ENCODE measurements at regions of chr11 and their contacts with region 1.

Region 1: DNA sequence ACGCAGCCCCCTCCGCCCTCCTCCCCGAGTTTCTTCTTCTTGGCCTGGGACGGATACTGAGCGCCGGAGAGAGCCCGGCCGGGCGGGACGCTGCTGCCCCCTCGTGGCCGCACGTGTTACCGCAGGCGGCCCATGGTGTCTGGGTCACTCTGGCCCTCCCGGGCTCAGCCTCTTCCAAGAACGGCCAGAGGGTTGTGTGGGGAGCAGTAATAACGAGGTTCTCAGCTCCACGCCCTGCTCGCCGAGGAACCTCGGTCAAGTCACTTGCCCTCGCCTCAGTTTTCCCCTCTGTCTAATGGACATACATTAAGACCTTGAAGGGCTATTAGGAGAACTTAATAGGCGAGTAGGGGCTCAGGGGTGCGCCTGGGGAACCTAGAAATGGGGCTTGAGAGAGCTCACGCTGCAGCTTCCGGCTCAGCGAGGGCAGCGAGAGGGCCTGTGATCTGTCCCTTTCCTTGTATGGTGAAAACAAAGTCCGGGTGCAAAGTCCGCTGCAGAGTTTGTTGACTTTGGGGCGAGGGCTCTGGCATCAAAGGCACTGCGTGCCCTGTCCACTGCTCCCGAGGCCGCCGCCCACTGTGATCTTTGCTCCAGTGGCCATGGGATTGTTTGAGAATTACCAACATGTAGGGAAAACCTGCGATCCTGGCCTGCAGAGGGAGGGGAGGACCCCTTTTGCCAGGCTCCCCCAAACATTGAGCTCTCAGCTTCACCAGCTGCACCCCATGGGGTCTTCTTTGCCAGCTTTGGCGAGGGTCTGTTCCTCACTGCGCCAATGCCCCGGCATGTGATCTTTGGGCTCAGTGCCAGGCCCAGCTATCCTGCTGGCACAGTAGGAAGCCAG is 14.4 kb upstream of the LRP5 start:
- DNase-seq: peak; percentile 89 to 96 (median 94)
- ATAC-seq: peak; percentile 84 to 92 (median 88)
- H3K4me3 ChIP-seq: peak overlapping the region; percentile 16 to 45 (median 38)
- H3K27ac ChIP-seq: peak overlapping the region; percentile 87 to 98 (median 97)
- H3K4me1 ChIP-seq: peaks cover 3 to 34% (median 10%) of the 10 kb centered on the region in 4 donors
- H3K27me3 ChIP-seq: no peaks in the 10 kb centered on the region
- CTCF ChIP-seq: peak; percentile 96 to 99 (median 98)
- POLR2A ChIP-seq: peak; percentile 64

Region 2: GRCh38 chr11:68213555-68214174 is 84.4 kb before region 1 on chr11:
- intact Hi-C with region 1: loop called in 1 of 2 experiments (anchors 10 kb)
- DNase-seq: peak; percentile 90 to 91 (median 91)
- ATAC-seq: peak; percentile 54 to 78 (median 77)
- H3K4me3 ChIP-seq: peak overlapping the region; percentile 72 to 85 (median 81)
- H3K27ac ChIP-seq: peak overlapping the region; percentile 93 to 99 (median 98)
- H3K4me1 ChIP-seq: peaks cover 0 to 47% (median 13%) of the 10 kb centered on the region in 4 donors
- H3K27me3 ChIP-seq: no peaks in the 10 kb centered on the region
- CTCF ChIP-seq: peak in 1 of 4 donors; percentile 19
- POLR2A ChIP-seq: peak; percentile 96

Region 3: DNA sequence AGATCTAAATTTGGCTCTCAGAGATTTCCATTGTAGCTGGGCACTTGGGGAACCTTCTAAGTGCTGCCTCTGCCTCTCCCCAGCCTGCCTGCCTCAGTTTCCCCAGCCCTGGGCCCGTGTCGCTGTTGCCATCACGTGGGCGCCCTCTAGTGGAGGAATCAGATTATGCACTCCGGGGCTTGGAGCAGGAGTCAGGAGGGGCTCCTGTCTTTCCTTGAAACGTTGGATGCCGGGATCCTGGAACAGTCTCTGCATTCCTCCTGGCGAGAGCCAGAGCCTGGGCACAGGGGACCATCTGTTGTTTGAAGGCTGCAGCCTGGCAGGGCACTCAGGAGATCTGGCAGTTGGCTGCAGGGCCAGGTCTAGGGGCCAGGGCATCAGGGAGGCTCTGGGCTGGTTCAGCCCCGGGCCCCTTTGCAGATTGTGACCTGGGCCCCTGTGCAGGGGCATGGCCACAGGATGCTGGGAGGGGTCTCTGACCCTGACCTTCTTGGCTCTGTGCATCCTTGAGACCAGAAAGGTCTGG is 86.0 kb after region 1 on chr11:
- intact Hi-C with region 1: loop called in 1 of 2 experiments (anchors 10 kb)
- DNase-seq: peak in 2 of 3 donors; percentile 68 to 70
- ATAC-seq: no peak
- H3K4me3 ChIP-seq: no peak overlapping the region
- H3K27ac ChIP-seq: no peak overlapping the region
- H3K4me1 ChIP-seq: peaks cover 2 to 74% (median 34%) of the 10 kb centered on the region in 4 donors
- H3K27me3 ChIP-seq: no peaks in the 10 kb centered on the region
- CTCF ChIP-seq: peak; percentile 85 to 95 (median 91)
- POLR2A ChIP-seq: no peak

Measured in right lobe of liver (tissue), 6 donors.